ENCODE measurements at regions of chr20 and their contacts with region 1.

Region 1: GRCh38 chr20:50744143-50744792 is 12.9 kb downstream of the PARD6B start:
- DNase-seq: peak; percentile 44
- H3K4me3 Mint-ChIP-seq: no peak overlapping the region
- H3K27ac Mint-ChIP-seq: no peak overlapping the region
- H3K4me1 Mint-ChIP-seq: peaks cover 48% of the 10 kb centered on the region
- H3K27me3 Mint-ChIP-seq: no peaks in the 10 kb centered on the region

Region 2: DNA sequence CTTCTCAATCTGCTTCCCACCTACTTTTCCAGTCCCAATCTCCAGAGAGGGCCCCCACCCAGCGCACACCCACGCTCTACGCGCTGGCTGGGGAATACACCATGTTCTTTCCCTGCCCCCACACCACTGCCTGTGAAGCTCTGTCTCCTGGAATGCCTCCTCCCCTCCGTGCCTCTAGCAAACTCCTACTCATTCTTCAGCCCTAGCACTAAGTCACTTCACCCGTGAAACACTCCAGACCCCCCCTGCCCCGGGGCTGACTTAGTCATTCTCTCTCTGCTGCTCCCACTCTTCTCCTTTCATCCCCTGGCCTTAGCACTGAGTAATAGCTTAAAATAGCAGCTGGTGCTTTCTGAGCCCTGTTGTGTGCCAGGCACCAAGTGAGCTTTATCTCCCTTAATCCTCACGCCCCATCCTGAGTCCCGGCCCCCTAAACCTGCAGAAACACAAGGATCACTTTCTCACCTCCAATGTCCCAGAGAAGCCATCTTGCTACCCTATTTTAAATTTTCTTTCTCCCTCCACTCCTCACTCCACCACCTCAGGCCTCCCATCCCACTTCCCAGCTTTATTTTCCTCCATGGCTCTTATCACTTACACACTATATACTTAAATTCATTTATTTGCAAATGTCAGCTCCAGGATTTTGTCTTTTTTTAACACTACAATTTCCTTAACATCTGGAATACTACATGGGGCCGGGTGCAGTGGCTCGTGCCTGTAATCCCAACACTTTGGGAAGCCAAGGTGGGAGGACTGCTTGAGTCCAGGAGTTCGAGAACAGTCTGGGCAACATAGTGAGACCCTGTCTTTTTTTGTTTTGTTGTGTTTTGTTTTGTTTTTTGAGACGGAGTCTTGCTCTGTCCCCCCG is 19.2 kb before region 1 on chr20:
- CTCF ChIA-PET with region 1: interaction called, 21 read pairs
- intact Hi-C with region 1: no loop called
- DNase-seq: peak; percentile 91
- H3K4me3 Mint-ChIP-seq: no peak overlapping the region
- H3K27ac Mint-ChIP-seq: no peak overlapping the region
- H3K4me1 Mint-ChIP-seq: peaks cover 13% of the 10 kb centered on the region
- H3K27me3 Mint-ChIP-seq: no peaks in the 10 kb centered on the region

Region 3: DNA sequence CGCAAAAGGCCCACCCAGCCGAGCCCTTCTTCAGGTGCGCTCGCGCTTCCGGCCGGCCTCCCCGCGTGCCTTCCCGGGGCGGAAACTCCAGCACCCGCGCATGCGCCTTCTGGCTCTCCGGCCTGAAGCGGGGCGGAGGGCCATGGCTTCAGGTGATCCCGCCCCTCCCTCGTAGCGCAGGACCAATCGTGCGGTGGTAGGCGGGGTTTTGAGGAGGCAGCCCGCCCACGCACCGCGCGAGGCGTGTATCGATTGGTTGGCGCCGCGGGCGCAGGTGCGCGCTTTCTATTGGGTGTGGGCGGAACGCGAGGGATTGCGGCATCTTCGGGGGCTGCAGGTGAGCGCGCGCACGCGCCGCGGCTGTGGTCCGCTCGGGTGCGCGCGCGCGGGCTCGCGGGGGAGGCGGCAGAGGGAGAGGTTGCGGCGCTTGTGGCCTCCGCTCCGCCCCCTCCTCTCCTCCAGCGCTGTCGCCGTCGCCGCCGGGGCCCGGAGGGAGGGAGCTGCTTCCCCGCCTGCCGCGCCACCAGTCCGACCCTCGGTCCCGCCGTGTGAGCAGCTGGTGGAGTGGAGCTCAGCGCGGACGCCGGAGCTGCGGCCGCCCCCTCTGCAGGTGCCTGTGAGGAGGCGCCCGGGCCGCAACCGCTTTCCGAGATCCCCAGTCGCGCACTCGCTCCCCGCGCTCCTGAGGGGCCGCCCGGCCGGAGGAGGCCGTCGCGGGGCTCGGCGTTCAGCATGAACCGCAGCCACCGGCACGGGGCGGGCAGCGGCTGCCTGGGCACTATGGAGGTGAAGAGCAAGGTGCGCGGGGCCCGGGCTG is 13.0 kb before region 1 on chr20 and contains the start of gene PARD6B:
- CTCF ChIA-PET with region 1: interaction called, 13 read pairs
- intact Hi-C with region 1: loop called (anchors 1 kb)
- DNase-seq: peak; percentile 100
- H3K4me3 Mint-ChIP-seq: peak within 1 kb of the TSS; percentile 86
- H3K27ac Mint-ChIP-seq: peak within 1 kb of the TSS; percentile 70
- H3K4me1 Mint-ChIP-seq: peaks cover 45% of the 10 kb centered on the region
- H3K27me3 Mint-ChIP-seq: no peaks in the 10 kb centered on the region
- total RNA-seq, gene PARD6B: 3.3 to 3.9 TPM

Measured in activated naive CD4-positive, alpha-beta T cell treated with anti-CD3 and anti-CD28 coated beads for 36 hours (primary cell).